ENCODE measurements at regions of chrX and their contacts with region 1.

Region 1: GRCh38 chrX:136028251-136028984 is 43.2 kb downstream of the SLC9A6 start:
- DNase-seq: peak; percentile 23
- ATAC-seq: no peak
- H3K4me3 ChIP-seq: no peak overlapping the region
- H3K27ac ChIP-seq: no peak overlapping the region
- H3K4me1 ChIP-seq: no peaks in the 10 kb centered on the region
- H3K27me3 ChIP-seq: no peaks in the 10 kb centered on the region
- CTCF ChIP-seq: peak; percentile 59
- EP300 ChIP-seq: no peak
- POLR2A ChIP-seq: no peak
- RAD21 ChIP-seq: no peak

Region 2: DNA sequence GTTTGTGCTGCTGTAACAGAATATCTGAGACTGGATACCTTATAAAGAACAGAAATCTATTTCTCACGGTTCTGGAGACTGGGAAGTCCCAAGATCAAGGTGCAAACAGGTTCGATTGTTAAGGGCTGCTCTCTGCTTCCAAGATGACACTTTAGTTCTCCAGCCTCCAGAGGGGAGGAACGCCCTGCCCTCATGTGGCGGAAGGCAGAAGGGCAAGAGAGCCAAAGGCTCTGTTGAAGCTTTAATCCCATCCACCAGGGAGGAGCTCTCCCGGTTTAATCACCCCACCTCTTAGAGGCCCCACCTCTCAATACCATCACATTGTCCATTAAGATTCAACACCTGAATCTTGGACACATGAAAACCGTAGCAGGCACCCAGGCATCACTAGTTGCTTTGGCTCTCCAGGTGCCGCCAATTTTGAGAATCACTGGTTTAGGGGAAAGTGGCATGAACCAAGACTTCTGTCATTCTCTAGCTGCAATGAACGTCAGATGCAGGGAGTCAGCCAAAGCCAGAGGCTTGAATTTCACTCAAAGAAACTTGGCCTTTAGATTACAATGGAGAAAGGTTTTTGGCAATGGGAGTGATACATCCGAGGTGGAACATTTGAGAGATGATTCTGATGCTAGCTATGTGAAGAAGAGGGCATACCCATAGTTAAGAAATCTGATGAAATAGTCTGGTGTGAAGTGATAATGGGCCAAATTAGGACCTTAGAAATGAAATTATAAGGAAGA is 134.6 kb after region 1 on chrX:
- CTCF ChIA-PET with region 1: interaction called, 9 read pairs
- POLR2A ChIA-PET with region 1: no interaction called
- in situ Hi-C with region 1: loop called (anchors 10 kb)
- intact Hi-C with region 1: no loop called
- DNase-seq: peak; percentile 13
- ATAC-seq: peak; percentile 92
- H3K4me3 ChIP-seq: no peak overlapping the region
- H3K27ac ChIP-seq: no peak overlapping the region
- H3K4me1 ChIP-seq: no peaks in the 10 kb centered on the region
- H3K27me3 ChIP-seq: no peaks in the 10 kb centered on the region
- CTCF ChIP-seq: peak; percentile 66
- EP300 ChIP-seq: no peak
- POLR2A ChIP-seq: no peak
- RAD21 ChIP-seq: no peak

Region 3: GRCh38 chrX:136209016-136209738 is 180.8 kb after region 1 on chrX:
- CTCF ChIA-PET with region 1: interaction called, 12 read pairs
- POLR2A ChIA-PET with region 1: no interaction called
- in situ Hi-C with region 1: no loop called
- intact Hi-C with region 1: loop called (anchors 5 kb)
- DNase-seq: no peak
- ATAC-seq: peak; percentile 80
- H3K4me3 ChIP-seq: no peak overlapping the region
- H3K27ac ChIP-seq: no peak overlapping the region
- H3K4me1 ChIP-seq: no peaks in the 10 kb centered on the region
- H3K27me3 ChIP-seq: no peaks in the 10 kb centered on the region; a peak in 2 of 5 replicates
- CTCF ChIP-seq: peak; percentile 47
- EP300 ChIP-seq: no peak
- POLR2A ChIP-seq: no peak
- RAD21 ChIP-seq: no peak

Region 4: GRCh38 chrX:136268051-136269048 is 239.9 kb after region 1 on chrX:
- CTCF ChIA-PET with region 1: no interaction called
- POLR2A ChIA-PET with region 1: no interaction called
- in situ Hi-C with region 1: no loop called
- intact Hi-C with region 1: loop called (anchors 5 kb)
- DNase-seq: peak; percentile 4
- ATAC-seq: peak; percentile 44; the same call in 2 of the 3 replicates
- H3K4me3 ChIP-seq: no peak overlapping the region
- H3K27ac ChIP-seq: no peak overlapping the region
- H3K4me1 ChIP-seq: no peaks in the 10 kb centered on the region
- H3K27me3 ChIP-seq: no peaks in the 10 kb centered on the region
- CTCF ChIP-seq: peak; percentile 59
- EP300 ChIP-seq: no peak
- POLR2A ChIP-seq: no peak
- RAD21 ChIP-seq: no peak

Region 5: DNA sequence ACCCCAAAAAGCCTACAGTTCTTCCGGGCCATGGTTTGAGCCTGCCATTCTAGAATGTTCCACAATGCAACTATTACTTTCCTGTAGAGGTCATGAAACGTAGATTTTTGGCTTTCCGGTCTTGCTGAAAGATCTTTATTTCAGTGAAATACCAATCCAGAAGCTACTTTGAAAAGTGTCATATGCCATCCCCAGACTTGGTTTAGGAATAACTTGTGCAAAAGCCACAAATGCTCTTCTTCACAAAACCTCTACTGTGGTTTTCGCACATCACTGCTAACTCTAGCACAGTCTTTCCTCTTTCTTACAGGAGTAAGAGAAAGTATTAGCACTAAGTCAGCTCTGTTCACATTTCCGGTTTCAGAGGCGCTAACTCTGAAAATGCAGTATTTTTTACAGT is 606.8 kb after region 1 on chrX:
- CTCF ChIA-PET with region 1: no interaction called
- POLR2A ChIA-PET with region 1: no interaction called
- in situ Hi-C with region 1: no loop called
- intact Hi-C with region 1: no loop called
- DNase-seq: no peak
- ATAC-seq: no peak
- H3K4me3 ChIP-seq: no peak overlapping the region
- H3K27ac ChIP-seq: no peak overlapping the region
- H3K4me1 ChIP-seq: no peaks in the 10 kb centered on the region
- H3K27me3 ChIP-seq: no peaks in the 10 kb centered on the region
- CTCF ChIP-seq: no peak
- EP300 ChIP-seq: no peak
- POLR2A ChIP-seq: no peak
- RAD21 ChIP-seq: no peak

Region 6: GRCh38 chrX:136694431-136695087 is 666.1 kb after region 1 on chrX:
- CTCF ChIA-PET with region 1: interaction called, 4 read pairs
- POLR2A ChIA-PET with region 1: no interaction called
- in situ Hi-C with region 1: no loop called
- intact Hi-C with region 1: loop called (anchors 5 kb)
- DNase-seq: peak; percentile 10
- ATAC-seq: 0 out of 3 replicates have a peak, but pooled peaks have one; percentile 50
- H3K4me3 ChIP-seq: no peak overlapping the region
- H3K27ac ChIP-seq: no peak overlapping the region
- H3K4me1 ChIP-seq: no peaks in the 10 kb centered on the region
- H3K27me3 ChIP-seq: no peaks in the 10 kb centered on the region
- CTCF ChIP-seq: peak; percentile 67
- EP300 ChIP-seq: no peak
- POLR2A ChIP-seq: no peak
- RAD21 ChIP-seq: no peak